CD4-positive, alpha-beta T cell (primary cell): ENCODE measurements at regions of chr12 and their contacts with region 1.

Region 1: GRCh38 chr12:47949441-47950308 is 13.7 kb upstream of the TMEM106C start:
- DNase-seq: peak; percentile 11 to 72 (median 38)
- ATAC-seq: peak; percentile 73
- H3K4me3 ChIP-seq: no peak overlapping the region
- H3K4me3 Mint-ChIP-seq: no peak overlapping the region
- H3K27ac ChIP-seq: no peak overlapping the region
- H3K27ac Mint-ChIP-seq: no peak overlapping the region
- H3K4me1 ChIP-seq: peaks cover 5% of the 10 kb centered on the region
- H3K4me1 Mint-ChIP-seq: no peaks in the 10 kb centered on the region
- H3K27me3 ChIP-seq: no peaks in the 10 kb centered on the region
- H3K27me3 Mint-ChIP-seq: peaks cover 4% of the 10 kb centered on the region
- CTCF ChIP-seq: peak; percentile 74

Region 2: GRCh38 chr12:47742253-47742825 is 207.3 kb before region 1 on chr12:
- CTCF ChIA-PET with region 1: interaction called, 6 read pairs
- POLR2A ChIA-PET with region 1: no interaction called
- intact Hi-C with region 1: loop called in 1 of 2 experiments (anchors 5 kb)
- DNase-seq: peak; percentile 57 to 83 (median 68)
- ATAC-seq: peak; percentile 38
- H3K4me3 ChIP-seq: no peak overlapping the region
- H3K4me3 Mint-ChIP-seq: no peak overlapping the region
- H3K27ac ChIP-seq: no peak overlapping the region
- H3K27ac Mint-ChIP-seq: no peak overlapping the region
- H3K4me1 ChIP-seq: peaks cover 38% of the 10 kb centered on the region
- H3K4me1 Mint-ChIP-seq: peaks cover 42% of the 10 kb centered on the region
- H3K27me3 ChIP-seq: no peaks in the 10 kb centered on the region
- H3K27me3 Mint-ChIP-seq: no peaks in the 10 kb centered on the region
- CTCF ChIP-seq: peak; percentile 100

Region 3: DNA sequence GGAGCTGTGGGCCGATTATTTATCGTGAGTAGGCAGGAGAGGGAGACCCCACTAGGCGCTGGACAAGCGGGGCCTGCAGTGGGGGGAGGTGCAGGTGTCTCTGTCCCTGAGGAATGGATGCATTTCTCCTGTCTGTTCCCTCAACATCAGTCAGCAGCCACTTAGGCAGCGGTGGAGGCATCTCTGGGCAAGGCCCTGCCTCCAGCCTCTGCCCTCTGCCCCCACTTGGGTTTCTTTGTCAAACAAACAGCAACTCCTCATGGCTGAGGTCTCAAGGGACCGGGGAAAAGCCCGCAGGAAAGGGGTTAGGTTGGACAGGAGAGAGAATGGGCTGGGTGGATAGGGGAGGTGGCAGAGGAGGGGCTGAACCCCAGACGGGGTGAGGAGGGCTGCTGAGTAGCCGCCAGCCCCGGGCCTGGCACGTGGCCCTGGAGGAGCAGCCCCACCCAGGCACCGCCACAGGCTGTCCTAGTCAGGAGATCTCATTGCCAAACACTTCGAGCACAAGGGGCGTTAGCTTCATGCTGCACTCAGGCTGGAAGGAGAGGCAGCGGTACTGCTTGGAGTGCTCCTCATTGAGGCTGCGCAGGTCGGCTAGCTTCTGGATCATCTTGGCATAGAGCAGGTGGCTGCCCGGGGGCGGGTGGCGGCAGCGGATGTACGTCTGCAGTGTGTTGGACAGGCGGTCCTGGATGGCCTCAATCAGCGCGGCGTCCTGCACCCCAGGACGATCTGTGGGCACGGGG is 105.2 kb before region 1 on chr12:
- CTCF ChIA-PET with region 1: no interaction called
- POLR2A ChIA-PET with region 1: no interaction called
- intact Hi-C with region 1: loop called in 1 of 2 experiments (anchors 5 kb)
- DNase-seq: no peak
- ATAC-seq: no peak
- H3K4me3 ChIP-seq: no peak overlapping the region
- H3K4me3 Mint-ChIP-seq: no peak overlapping the region
- H3K27ac ChIP-seq: no peak overlapping the region
- H3K27ac Mint-ChIP-seq: no peak overlapping the region
- H3K4me1 ChIP-seq: no peaks in the 10 kb centered on the region
- H3K4me1 Mint-ChIP-seq: no peaks in the 10 kb centered on the region
- H3K27me3 ChIP-seq: no peaks in the 10 kb centered on the region
- H3K27me3 Mint-ChIP-seq: no peaks in the 10 kb centered on the region
- CTCF ChIP-seq: no peak

Region 4: DNA sequence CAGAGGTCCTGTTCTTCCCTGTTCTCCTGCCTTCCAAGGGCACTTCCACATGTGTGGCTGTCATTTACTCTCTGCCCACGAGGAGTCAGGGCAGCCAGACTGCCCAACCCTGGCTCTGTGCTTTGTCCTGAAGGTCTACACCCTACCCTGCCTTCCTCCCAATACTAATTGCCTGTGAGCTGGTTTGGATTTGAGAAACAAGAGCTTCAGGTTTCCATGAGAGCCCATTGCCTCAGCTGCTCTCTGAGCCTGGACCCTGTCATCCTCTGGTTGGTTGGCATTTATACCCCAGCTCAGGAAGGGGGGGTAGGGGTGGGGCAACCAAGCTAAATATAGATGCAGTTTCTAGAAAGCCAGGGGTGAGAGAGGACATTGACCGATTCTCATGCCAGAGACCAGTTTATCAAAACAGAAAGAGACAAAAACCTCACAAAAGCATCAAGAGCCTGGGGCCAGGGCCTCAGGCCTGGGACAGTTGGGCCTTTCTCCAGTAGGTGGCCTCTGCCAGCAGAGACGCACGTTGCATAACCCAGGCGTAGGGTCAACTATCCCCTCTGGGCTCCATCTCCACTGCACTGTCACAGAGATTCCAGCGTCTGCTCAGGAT is 79.4 kb before region 1 on chr12:
- CTCF ChIA-PET with region 1: no interaction called
- POLR2A ChIA-PET with region 1: no interaction called
- intact Hi-C with region 1: loop called in 1 of 2 experiments (anchors 5 kb)
- DNase-seq: peak in 3 of 14 experiments; percentile 24 to 42 (median 31)
- ATAC-seq: no peak
- H3K4me3 ChIP-seq: no peak overlapping the region
- H3K4me3 Mint-ChIP-seq: no peak overlapping the region
- H3K27ac ChIP-seq: no peak overlapping the region
- H3K27ac Mint-ChIP-seq: no peak overlapping the region
- H3K4me1 ChIP-seq: no peaks in the 10 kb centered on the region
- H3K4me1 Mint-ChIP-seq: no peaks in the 10 kb centered on the region
- H3K27me3 ChIP-seq: no peaks in the 10 kb centered on the region
- H3K27me3 Mint-ChIP-seq: no peaks in the 10 kb centered on the region
- CTCF ChIP-seq: peak; percentile 14

Region 5: DNA sequence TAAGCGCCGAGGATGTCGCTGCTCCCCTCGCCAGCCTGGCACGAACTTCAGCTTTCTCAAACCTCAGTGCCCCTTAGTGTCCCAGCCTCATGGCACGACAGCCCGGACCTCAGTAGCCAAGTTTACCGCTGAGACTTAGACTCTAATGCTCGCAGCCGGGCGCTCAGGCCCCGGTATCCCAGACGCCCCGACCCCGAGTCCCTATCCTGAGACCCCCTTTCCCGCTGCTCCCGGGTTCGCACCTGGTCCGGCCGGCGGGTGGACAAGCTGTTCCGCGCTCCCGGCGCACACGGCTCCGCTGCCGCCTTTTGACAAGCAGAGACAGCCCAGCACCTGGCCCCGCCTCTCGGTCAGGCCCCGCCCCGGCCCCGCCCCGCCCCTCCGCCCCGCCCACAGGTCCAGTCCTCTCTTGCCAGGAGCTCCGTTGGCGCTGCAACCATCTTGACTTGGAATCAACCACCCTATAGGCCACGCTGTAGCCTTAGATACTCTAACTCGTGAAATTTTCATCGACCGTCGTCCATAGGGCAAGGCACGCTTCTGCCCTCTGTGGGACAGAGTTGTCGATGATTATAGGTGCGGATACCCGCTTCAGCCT is 44.9 kb before region 1 on chr12 and contains the start of gene VDR:
- CTCF ChIA-PET with region 1: interaction called, 3 read pairs
- POLR2A ChIA-PET with region 1: no interaction called
- intact Hi-C with region 1: loop called in 1 of 2 experiments (anchors 2 kb)
- DNase-seq: peak; percentile 49 to 91 (median 66)
- ATAC-seq: peak; percentile 70
- H3K4me3 ChIP-seq: peak within 1 kb of the TSS; percentile 81
- H3K4me3 Mint-ChIP-seq: peak within 1 kb of the TSS; percentile 95
- H3K27ac ChIP-seq: no peak within 1 kb of the TSS
- H3K27ac Mint-ChIP-seq: peak within 1 kb of the TSS; percentile 55
- H3K4me1 ChIP-seq: peaks cover 59% of the 10 kb centered on the region
- H3K4me1 Mint-ChIP-seq: peaks cover 59% of the 10 kb centered on the region
- H3K27me3 ChIP-seq: no peaks in the 10 kb centered on the region
- H3K27me3 Mint-ChIP-seq: no peaks in the 10 kb centered on the region
- CTCF ChIP-seq: peak; percentile 60
- total RNA-seq, gene VDR: 0.93 to 1.6 TPM

Region 6: DNA sequence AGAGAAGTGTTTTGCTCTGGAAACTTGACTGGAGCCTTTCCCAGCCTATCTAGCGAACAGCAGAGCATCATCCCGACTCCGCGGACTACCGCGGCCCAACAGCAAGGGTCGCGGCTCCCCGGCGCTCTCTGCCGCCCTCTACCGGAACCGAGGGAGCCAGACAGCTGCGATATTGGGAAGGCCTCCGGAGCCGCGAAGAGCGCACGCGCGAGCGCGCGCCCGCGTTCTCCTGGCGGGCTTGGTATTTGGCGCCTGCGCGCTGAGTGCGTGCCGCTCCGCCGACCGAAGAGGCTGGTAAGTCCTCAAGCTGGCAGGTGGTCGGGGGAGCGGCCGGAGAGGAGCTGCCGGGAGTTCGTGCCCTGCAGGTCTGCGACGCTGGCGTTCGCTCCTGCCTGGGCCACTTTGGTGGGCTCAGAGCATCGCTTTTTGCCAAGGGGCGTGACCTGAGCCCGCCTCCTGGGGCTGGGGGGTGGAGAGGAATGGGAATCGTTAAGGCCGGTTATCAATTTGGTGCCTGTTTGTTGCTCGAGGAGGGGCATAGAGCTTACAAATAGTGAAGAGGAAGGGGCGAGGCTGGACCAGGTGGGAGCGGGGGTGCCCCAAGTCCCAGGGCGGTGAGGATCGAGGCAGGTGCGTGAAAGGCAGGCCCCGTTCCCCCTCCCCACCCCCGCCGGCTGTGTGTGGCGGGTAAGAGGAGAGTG is 13.8 kb after region 1 on chr12 and contains the start of gene TMEM106C:
- CTCF ChIA-PET with region 1: interaction called, 16 read pairs
- POLR2A ChIA-PET with region 1: no interaction called
- intact Hi-C with region 1: no loop called
- DNase-seq: peak; percentile 84 to 97 (median 90)
- ATAC-seq: peak; percentile 97
- H3K4me3 ChIP-seq: peak within 1 kb of the TSS; percentile 85
- H3K4me3 Mint-ChIP-seq: peak within 1 kb of the TSS; percentile 95
- H3K27ac ChIP-seq: no peak within 1 kb of the TSS
- H3K27ac Mint-ChIP-seq: peak within 1 kb of the TSS; percentile 81
- H3K4me1 ChIP-seq: peaks cover 17% of the 10 kb centered on the region
- H3K4me1 Mint-ChIP-seq: peaks cover 38% of the 10 kb centered on the region
- H3K27me3 ChIP-seq: peaks cover 0 to 5% of the 10 kb centered on the region in 2 experiments
- H3K27me3 Mint-ChIP-seq: peaks cover 6% of the 10 kb centered on the region
- CTCF ChIP-seq: peak; percentile 97
- total RNA-seq, gene TMEM106C: 17.4 to 20.3 TPM

Region 7: GRCh38 chr12:48092611-48093010 is 142.9 kb after region 1 on chr12:
- CTCF ChIA-PET with region 1: no interaction called
- POLR2A ChIA-PET with region 1: no interaction called
- intact Hi-C with region 1: no loop called
- DNase-seq: no peak
- ATAC-seq: no peak
- H3K4me3 ChIP-seq: no peak overlapping the region
- H3K4me3 Mint-ChIP-seq: no peak overlapping the region
- H3K27ac ChIP-seq: no peak overlapping the region
- H3K27ac Mint-ChIP-seq: no peak overlapping the region
- H3K4me1 ChIP-seq: no peaks in the 10 kb centered on the region
- H3K4me1 Mint-ChIP-seq: no peaks in the 10 kb centered on the region
- H3K27me3 ChIP-seq: no peaks in the 10 kb centered on the region
- H3K27me3 Mint-ChIP-seq: no peaks in the 10 kb centered on the region
- CTCF ChIP-seq: no peak

Region 8: DNA sequence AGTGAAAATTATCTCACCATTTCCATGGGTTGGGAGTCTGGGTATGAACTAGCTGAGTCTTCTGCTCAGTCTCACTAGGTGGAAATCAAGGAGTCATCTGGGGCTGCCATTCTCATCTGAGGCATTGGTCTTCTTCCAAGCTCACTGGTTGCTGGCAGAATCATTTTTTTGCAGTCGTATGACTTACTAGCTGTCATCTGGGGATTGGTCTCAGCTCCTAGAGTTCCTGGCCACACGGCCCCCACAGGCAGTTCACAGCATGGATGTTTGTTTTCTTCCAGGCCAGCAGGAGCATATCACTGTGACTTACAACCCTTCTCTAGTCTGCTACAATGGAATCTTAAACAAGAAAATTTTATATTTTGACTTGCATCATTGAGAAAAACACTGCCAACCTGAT is 272.0 kb after region 1 on chr12:
- CTCF ChIA-PET with region 1: no interaction called
- POLR2A ChIA-PET with region 1: no interaction called
- intact Hi-C with region 1: no loop called
- DNase-seq: no peak
- ATAC-seq: no peak
- H3K4me3 ChIP-seq: no peak overlapping the region
- H3K4me3 Mint-ChIP-seq: no peak overlapping the region
- H3K27ac ChIP-seq: no peak overlapping the region
- H3K27ac Mint-ChIP-seq: no peak overlapping the region
- H3K4me1 ChIP-seq: no peaks in the 10 kb centered on the region
- H3K4me1 Mint-ChIP-seq: no peaks in the 10 kb centered on the region
- H3K27me3 ChIP-seq: peaks cover 0 to 8% of the 10 kb centered on the region in 2 experiments
- H3K27me3 Mint-ChIP-seq: peaks cover 14% of the 10 kb centered on the region
- CTCF ChIP-seq: no peak